Adrenal gland (tissue), 19 donors: ENCODE measurements at regions of chr7 and their contacts with region 1.

Region 1: DNA sequence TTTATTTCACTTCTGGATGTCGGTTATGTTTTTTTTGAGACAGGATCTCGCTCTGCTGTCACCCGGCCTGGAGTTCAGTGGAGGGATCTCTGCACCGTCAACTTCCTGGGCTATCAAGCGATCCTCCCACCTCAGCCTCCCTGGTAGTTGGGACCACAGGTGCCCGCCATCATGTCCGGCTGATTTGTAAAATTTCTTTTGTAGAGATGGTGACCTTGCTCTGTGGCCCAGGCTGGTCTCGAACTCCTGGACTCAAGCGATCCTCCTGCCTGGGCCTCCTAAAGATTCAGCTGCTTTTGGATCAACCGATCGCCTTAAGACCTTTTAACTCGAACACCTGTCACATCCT is 606 bp upstream of the RABGEF1 start:
- DNase-seq: peak in 3 of 7 donors; percentile 25 to 69 (median 43)
- H3K4me3 ChIP-seq: peak overlapping the region; percentile 10 to 99 (median 89)
- H3K27ac ChIP-seq: peak overlapping the region; percentile 97 to 100 (median 99)
- H3K4me1 ChIP-seq: peaks cover 7 to 9% of the 10 kb centered on the region in 2 donors
- H3K27me3 ChIP-seq: no peaks in the 10 kb centered on the region
- CTCF ChIP-seq: no peak
- POLR2A ChIP-seq: no peak

Region 2: DNA sequence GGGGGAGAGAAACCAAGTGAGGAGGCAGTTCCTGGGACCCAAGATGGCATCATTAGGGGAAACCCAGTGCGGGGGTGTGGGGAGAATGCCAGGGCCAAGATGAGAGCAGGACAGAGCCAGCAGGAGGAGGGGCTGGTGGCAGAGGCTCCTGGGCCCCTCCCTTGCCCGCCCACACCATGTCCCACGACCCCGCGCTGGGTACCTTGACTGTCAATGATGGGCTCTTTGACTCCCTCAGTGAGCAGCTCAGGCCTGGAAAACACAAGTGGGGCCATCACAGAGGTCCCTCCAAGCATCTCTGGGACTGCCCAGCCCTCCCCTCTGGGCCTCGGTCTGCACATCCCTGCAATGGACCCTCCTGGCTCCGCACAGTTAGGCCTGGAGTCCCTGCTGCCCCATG is 76.0 kb after region 1 on chr7:
- intact Hi-C with region 1: no loop called
- DNase-seq: no peak
- H3K4me3 ChIP-seq: no peak overlapping the region
- H3K27ac ChIP-seq: no peak overlapping the region
- H3K4me1 ChIP-seq: no peaks in the 10 kb centered on the region
- H3K27me3 ChIP-seq: no peaks in the 10 kb centered on the region
- CTCF ChIP-seq: no peak
- POLR2A ChIP-seq: no peak

Region 3: GRCh38 chr7:66844552-66845378 is 104.8 kb after region 1 on chr7:
- intact Hi-C with region 1: loop called in 1 of 2 experiments (anchors 10 kb)
- DNase-seq: peak; percentile 98 to 100 (median 99)
- H3K4me3 ChIP-seq: peak overlapping the region; percentile 76 to 94 (median 79)
- H3K27ac ChIP-seq: peak overlapping the region; percentile 79 to 94 (median 91)
- H3K4me1 ChIP-seq: peaks cover 6 to 12% of the 10 kb centered on the region in 2 donors
- H3K27me3 ChIP-seq: no peaks in the 10 kb centered on the region
- CTCF ChIP-seq: peak in 5 of 6 experiments; percentile 36 to 68 (median 46)
- POLR2A ChIP-seq: peak; percentile 82 to 97